ENCODE measurements at regions of chr1 and their contacts with region 1.

Region 1: DNA sequence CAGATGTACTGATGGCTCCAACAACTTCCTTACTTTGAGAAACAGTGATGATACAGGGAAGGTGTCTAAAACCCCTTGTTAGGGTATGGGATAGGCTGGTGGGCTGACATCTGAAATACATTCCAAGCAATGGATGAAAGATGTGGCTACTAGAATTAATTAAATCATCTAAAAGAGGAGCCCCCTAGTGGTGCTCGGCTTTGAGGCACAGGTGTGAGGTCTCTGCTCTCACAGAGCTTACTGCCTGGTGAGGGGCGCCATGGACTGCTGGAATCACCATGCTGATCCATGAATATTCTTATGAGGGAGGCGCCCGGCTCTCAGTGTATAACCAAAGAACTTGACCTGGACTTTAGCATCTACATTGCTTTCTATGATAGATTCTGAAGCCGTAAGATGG is 48.5 kb downstream of the GNG4 start:
- DNase-seq: peak; percentile 63
- ATAC-seq: peak; percentile 60
- H3K4me3 Mint-ChIP-seq: no peak overlapping the region
- H3K27ac Mint-ChIP-seq: no peak overlapping the region
- H3K4me1 Mint-ChIP-seq: no peaks in the 10 kb centered on the region
- H3K27me3 Mint-ChIP-seq: no peaks in the 10 kb centered on the region
- CTCF ChIP-seq: peak; percentile 38

Region 2: DNA sequence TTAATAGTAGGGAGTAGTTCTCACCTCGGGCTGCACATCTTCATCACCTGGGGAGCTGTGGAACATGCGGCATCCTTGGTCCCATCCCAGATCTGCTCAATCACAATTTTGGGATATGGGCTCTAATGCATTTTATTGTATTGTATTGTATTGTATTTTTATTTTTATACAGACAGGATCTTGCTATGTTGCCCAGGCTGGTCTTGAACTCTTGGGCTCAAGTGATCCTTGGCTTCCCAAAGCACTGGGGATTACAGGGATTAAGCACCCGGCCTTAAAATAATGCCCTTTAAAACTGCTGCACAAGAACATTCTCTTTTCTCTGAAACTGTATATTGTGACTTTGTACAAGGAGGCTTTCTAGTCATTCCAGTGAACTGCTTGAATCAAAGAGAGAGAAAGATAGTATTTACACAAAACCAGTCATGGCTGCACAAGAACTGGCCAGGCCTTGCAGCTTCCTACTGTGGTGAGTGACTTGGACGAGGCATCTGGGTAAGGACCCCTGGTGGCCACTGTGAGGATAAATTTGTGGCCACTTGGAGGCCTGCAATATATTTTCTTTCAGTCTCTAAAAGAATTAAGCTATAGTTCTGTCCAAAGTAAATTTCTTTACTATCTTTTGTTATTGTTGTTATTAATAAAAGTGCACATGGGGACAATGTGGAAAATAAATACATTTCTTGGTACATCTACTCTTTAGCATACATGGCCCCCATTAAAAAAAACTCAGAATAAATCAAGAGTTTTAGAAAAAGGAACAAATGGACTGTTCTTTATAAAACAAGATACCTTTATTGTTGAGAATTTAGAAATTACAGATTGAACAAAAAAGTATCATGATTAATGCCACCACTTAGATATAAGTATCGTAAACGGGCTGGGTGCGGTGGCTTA is 185.8 kb before region 1 on chr1:
- CTCF ChIA-PET with region 1: no interaction called
- POLR2A ChIA-PET with region 1: no interaction called
- intact Hi-C with region 1: no loop called
- DNase-seq: peak; percentile 74
- ATAC-seq: peak; percentile 87
- H3K4me3 Mint-ChIP-seq: no peak overlapping the region
- H3K27ac Mint-ChIP-seq: no peak overlapping the region
- H3K4me1 Mint-ChIP-seq: peaks cover 3% of the 10 kb centered on the region
- H3K27me3 Mint-ChIP-seq: no peaks in the 10 kb centered on the region
- CTCF ChIP-seq: peak; percentile 88

Region 3: GRCh38 chr1:235567812-235568503 is 33.1 kb before region 1 on chr1:
- CTCF ChIA-PET with region 1: interaction called, 10 read pairs
- POLR2A ChIA-PET with region 1: no interaction called
- intact Hi-C with region 1: no loop called
- DNase-seq: peak; percentile 57
- ATAC-seq: peak; percentile 82
- H3K4me3 Mint-ChIP-seq: no peak overlapping the region
- H3K27ac Mint-ChIP-seq: peak overlapping the region; percentile 64
- H3K4me1 Mint-ChIP-seq: peaks cover 13% of the 10 kb centered on the region
- H3K27me3 Mint-ChIP-seq: no peaks in the 10 kb centered on the region
- CTCF ChIP-seq: no peak

Region 4: GRCh38 chr1:235642011-235642942 is 41.2 kb after region 1 on chr1:
- CTCF ChIA-PET with region 1: interaction called, 11 read pairs
- POLR2A ChIA-PET with region 1: no interaction called
- intact Hi-C with region 1: no loop called
- DNase-seq: peak; percentile 85
- ATAC-seq: peak; percentile 88
- H3K4me3 Mint-ChIP-seq: peak overlapping the region; percentile 57
- H3K27ac Mint-ChIP-seq: peak overlapping the region; percentile 87
- H3K4me1 Mint-ChIP-seq: peaks cover 26% of the 10 kb centered on the region
- H3K27me3 Mint-ChIP-seq: peaks cover 10% of the 10 kb centered on the region
- CTCF ChIP-seq: no peak

Region 5: DNA sequence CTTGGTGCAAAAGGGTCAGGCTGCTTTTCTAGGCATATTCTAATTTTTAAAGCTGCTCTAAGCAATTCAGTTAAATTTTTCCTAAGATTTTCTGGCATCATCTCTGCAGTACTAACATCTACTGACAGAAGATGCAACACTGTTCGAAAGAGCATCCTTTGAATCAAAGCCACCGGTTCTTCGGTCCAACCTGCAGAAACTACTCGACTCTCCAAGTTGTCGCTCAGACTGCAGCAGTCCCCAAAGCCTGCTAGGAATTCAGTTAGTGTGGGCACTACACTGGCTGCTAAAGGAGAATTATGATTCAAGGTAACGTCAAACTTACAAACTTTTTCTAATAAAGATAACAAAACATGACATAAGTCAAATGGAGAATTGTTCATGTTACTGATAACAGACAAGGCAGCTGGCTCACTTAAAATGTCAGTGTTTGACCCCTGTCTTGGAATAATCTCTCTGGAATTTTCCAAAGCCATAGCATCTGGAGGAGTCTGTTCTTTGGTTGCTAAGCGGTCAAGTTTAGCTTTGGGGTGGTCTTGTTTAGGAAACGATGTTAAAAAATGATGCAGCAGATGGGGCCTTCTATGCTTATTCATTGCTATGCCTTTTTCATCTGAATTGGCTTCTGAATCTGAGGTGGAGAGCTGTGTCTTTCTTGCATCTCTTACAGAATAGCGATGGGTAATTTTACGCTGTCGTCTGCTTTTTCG is 208.7 kb after region 1 on chr1:
- CTCF ChIA-PET with region 1: no interaction called
- POLR2A ChIA-PET with region 1: no interaction called
- intact Hi-C with region 1: no loop called
- DNase-seq: no peak
- ATAC-seq: no peak
- H3K4me3 Mint-ChIP-seq: no peak overlapping the region
- H3K27ac Mint-ChIP-seq: peak overlapping the region; percentile 9
- H3K4me1 Mint-ChIP-seq: peaks cover 1% of the 10 kb centered on the region
- H3K27me3 Mint-ChIP-seq: no peaks in the 10 kb centered on the region
- CTCF ChIP-seq: no peak

Measured in activated CD8-positive, alpha-beta T cell treated with anti-CD3 and anti-CD28 coated beads for 36 hours (primary cell).